ENCODE measurements at regions of chr12 and their contacts with region 1.

Region 1: DNA sequence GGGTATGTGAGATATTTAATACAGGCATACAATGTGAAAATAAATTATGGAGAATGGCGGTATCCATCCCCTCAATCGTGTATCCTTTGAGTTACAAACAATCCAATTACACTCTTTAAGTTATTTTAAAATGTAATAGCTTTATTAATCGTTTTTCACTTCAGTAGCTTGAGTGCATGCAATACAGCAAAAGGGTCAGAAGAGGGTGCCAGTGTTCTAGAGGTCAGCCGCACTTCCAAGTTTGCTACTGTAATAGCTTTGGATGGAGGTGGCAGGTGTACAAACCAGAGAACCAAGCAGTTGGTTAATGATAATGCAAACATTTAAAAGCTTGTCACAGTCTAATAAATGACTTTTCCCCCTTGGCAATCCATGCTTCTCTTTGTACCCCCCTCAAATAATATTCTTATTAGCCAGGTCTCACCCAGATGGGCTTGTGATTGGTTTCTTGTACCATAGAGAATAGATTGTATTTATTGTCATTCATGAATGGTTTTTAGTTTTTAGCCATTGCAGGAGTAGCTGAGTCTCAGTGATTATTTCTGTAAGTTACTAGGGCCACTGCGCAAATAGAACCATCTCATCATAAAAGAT is 127.0 kb downstream of the ERC1 start:
- DNase-seq: peak; percentile 53
- H3K4me3 ChIP-seq: no peak overlapping the region
- H3K27ac ChIP-seq: no peak overlapping the region
- H3K4me1 ChIP-seq: peaks cover 33% of the 10 kb centered on the region
- H3K27me3 ChIP-seq: no peaks in the 10 kb centered on the region
- CTCF ChIP-seq: peak; percentile 79 to 88

Region 2: GRCh38 chr12:1197264-1198018 is 79.4 kb after region 1 on chr12:
- CTCF ChIA-PET with region 1: no interaction called
- dilution Hi-C with region 1: no loop called
- in situ Hi-C with region 1: no loop called
- intact Hi-C with region 1: loop called (anchors 5 kb)
- DNase-seq: peak; percentile 96
- H3K4me3 ChIP-seq: no peak overlapping the region
- H3K27ac ChIP-seq: peak overlapping the region; percentile 82
- H3K4me1 ChIP-seq: peaks cover 27% of the 10 kb centered on the region
- H3K27me3 ChIP-seq: no peaks in the 10 kb centered on the region
- CTCF ChIP-seq: no peak

Region 3: GRCh38 chr12:1474041-1474573 is 356.0 kb after region 1 on chr12:
- CTCF ChIA-PET with region 1: interaction called, 4 read pairs
- dilution Hi-C with region 1: no loop called
- in situ Hi-C with region 1: no loop called
- intact Hi-C with region 1: loop called (anchors 1 kb)
- DNase-seq: peak; percentile 93
- H3K4me3 ChIP-seq: peak overlapping the region in 2 of 3 experiments; percentile 17 to 28
- H3K27ac ChIP-seq: peak overlapping the region; percentile 92
- H3K4me1 ChIP-seq: peaks cover 29% of the 10 kb centered on the region
- H3K27me3 ChIP-seq: no peaks in the 10 kb centered on the region
- CTCF ChIP-seq: no peak

Region 4: DNA sequence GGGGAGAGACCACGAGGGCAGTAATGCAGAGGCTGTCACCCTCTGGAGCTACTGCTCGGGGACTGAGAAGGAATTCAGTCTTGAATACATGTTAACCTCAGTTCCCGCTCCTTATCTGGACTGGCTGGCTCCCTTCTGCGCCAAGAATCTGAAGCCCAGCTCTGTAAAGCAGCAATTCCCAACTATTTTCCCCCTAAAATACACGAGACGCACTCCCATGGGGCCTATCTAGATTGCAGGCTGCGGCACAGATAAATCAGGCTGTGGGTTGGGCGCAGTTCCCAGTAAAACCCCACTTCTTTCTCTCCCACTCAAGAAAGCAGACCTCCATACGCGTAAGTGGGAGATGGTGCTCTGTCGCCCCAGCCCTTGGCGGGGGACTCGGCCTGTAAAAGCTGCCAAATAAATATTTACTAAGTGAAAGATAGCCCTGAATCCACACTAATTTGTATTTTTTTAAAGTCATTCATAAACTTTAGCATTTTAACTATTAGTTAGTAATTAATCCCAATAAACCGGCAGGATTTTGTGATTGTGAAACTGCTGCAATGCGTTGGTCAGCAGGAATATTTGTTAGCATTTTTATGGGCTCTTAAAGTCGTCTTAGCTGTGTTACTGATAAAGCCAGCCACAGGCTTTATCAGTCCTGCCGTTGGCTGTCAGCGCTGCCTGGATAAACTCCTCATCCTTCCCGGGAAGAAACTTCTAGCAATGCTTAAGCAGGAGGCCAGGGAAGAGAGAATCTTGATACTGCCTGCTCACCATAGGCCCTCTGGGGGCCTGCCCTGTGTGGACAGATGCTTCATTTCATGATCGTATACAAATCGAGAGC is 458.6 kb after region 1 on chr12:
- CTCF ChIA-PET with region 1: no interaction called
- dilution Hi-C with region 1: no loop called
- in situ Hi-C with region 1: loop called in 1 of 2 experiments (anchors 10 kb)
- intact Hi-C with region 1: no loop called
- DNase-seq: no peak
- H3K4me3 ChIP-seq: no peak overlapping the region
- H3K27ac ChIP-seq: no peak overlapping the region
- H3K4me1 ChIP-seq: peaks cover 3% of the 10 kb centered on the region
- H3K27me3 ChIP-seq: no peaks in the 10 kb centered on the region
- CTCF ChIP-seq: no peak